AG04449 (cell line): ENCODE measurements at regions of chr11 and their contacts with region 1.

Region 1: GRCh38 chr11:20647976-20648565 is 21.3 kb upstream of the NELL1 start:
- DNase-seq: no peak
- H3K4me3 ChIP-seq: no peak overlapping the region
- CTCF ChIP-seq: peak; percentile 71

Region 2: DNA sequence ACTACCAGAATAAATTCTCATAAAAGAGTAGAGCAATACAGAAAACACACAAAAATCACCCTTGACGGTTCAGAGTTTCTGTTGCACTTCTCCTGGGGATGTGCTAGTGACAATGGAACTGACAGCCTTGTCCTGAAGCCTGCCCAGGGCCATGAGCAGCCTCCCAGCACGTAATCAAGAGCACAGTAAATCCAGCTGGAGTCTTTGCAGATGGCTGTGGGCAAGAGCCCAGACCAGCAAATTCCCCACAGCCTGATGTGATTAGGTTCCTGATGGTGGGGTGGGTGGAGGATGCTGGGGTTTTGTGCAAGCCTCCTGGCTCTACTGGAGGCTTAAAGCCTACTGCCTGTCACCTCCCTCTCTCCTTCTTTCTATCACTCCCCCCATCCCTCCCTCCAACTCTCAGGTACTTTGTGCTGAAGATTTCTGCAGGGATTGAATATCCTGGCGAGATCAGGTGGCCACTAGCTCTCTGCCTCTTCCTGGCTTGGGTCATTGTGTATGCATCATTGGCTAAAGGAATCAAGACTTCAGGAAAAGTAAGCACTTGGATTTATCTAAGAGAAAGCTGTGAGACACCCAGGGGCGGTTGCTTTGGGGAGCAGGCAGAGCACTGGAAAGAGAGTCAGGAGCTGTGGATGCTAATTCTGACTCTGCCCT is 30.6 kb before region 1 on chr11:
- CTCF ChIA-PET with region 1: no interaction called
- POLR2A ChIA-PET with region 1: no interaction called
- DNase-seq: no peak
- H3K4me3 ChIP-seq: no peak overlapping the region
- CTCF ChIP-seq: no peak

Region 3: GRCh38 chr11:20671856-20672546 is 23.9 kb after region 1 on chr11:
- CTCF ChIA-PET with region 1: interaction called, 17 read pairs
- POLR2A ChIA-PET with region 1: no interaction called
- DNase-seq: no peak
- H3K4me3 ChIP-seq: no peak overlapping the region
- CTCF ChIP-seq: no peak

Region 4: GRCh38 chr11:22304337-22304961 is 1656.4 kb after region 1 on chr11:
- CTCF ChIA-PET with region 1: interaction called, 20 read pairs
- POLR2A ChIA-PET with region 1: no interaction called
- DNase-seq: no peak
- H3K4me3 ChIP-seq: no peak overlapping the region
- CTCF ChIP-seq: peak; percentile 27